Mucosa of descending colon (tissue), 3 donors: ENCODE measurements at regions of chr10 and their contacts with region 1.

Region 1: DNA sequence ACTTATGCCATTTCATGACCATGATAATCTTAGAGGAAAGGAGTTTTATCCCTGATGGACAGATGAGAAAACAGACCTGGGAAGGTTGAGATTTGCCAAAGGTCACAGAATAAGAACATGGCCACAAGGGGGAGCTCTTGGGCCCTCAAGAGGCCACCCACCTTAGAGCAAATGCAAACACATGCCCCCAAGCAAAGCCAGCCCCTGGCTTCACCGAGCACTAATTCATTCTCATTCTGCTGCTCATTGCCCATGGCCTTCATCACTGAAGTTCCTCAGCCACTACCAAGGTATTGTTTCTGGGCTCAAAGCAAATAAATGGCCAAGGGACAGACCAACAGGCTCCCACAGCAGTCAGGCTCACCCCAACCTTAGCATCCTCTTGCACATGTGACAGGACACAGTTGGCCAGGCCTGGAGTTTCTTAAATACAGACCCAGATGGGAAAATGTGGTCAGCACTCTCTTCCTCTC is 44.2 kb downstream of the PDLIM1 start:
- DNase-seq: peak in 2 of 3 donors; percentile 61 to 96
- ATAC-seq: peak; percentile 58
- H3K4me3 ChIP-seq: no peak overlapping the region
- H3K4me1 ChIP-seq: peaks cover 4% of the 10 kb centered on the region
- CTCF ChIP-seq: peak; percentile 48

Region 2: GRCh38 chr10:95333997-95334804 is 87.6 kb after region 1 on chr10:
- intact Hi-C with region 1: loop called in 1 of 2 experiments (anchors 10 kb)
- DNase-seq: peak in 1 of 3 donors; percentile 58
- ATAC-seq: peak; percentile 55
- H3K4me3 ChIP-seq: no peak overlapping the region
- H3K4me1 ChIP-seq: no peaks in the 10 kb centered on the region
- CTCF ChIP-seq: no peak

Region 3: GRCh38 chr10:95363303-95363912 is 116.8 kb after region 1 on chr10:
- intact Hi-C with region 1: loop called in 1 of 2 experiments (anchors 5 kb)
- DNase-seq: peak in 1 of 3 donors; percentile 83
- ATAC-seq: peak; percentile 83
- H3K4me3 ChIP-seq: no peak overlapping the region
- H3K4me1 ChIP-seq: no peaks in the 10 kb centered on the region
- CTCF ChIP-seq: peak; percentile 70